A673 (cell line): ENCODE measurements at regions of chr9 and their contacts with region 1.

Region 1: DNA sequence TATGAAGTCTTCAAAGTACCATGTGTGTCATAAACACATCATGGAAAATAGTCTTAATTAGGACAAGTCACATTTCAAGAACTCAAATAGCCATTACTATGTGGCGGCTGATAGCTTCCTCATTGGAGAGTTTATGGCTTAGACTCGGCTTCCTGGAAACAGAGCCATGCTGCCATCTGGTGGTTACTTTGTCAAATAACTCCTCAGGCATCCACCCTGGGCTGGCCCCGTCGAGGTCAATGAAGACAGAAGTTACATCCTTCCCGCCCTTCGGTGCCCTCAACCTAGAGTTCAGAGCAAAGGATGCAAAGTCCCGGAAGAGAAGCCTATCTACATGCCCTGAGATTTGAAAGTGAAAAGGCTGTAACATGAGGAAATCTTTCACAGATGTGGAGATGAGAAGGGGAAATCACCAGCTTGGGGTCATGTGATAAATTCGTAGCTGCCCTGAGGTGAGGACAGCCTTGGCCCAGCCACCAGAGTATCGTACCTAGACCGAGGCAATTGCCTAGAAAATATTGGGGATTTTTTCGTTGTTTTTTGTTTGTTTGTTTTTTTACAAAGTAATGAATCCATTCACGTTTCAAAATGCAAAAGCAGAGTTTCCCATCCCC is 45.5 kb upstream of the ZNF169 start:
- DNase-seq: peak; percentile 81
- H3K4me3 ChIP-seq: no peak overlapping the region
- H3K27ac ChIP-seq: no peak overlapping the region
- H3K4me1 ChIP-seq: peaks cover 12% of the 10 kb centered on the region
- H3K27me3 ChIP-seq: peaks cover 4% of the 10 kb centered on the region
- CTCF ChIP-seq: peak; percentile 82

Region 2: DNA sequence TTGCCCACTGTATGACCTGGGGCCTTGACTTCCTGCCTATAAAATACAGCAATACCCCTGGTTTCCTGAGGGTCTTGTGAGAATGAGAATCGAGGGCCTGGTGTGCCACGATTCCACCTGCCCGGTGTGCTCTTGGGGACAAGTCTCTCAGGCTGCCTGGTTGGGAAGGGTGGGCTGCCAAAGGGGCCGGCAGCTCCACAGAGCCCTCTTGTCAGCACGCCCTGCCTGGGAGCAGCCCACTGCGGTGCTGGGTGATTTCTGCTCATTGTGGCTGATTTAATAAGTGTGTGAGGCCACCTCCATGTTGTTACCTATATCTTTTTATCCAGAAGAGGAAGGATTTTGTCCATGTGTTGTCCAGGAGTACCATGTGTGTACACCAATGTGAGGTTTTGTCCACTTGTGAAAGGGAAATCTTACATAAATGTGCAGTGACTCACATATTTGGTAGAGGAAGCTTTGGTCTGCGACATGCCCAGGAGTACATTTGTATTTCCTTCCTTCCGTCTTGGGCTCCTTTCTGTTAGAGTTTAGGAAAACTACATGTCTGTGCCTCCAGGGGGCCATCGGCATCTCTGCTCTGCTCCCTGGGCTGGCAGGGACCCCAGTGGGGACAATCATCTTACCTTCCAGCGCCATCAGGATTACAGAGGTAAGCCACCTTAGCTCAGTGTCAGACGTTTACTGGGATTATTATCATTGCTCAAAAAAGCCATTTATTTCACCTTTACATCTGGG is 528.6 kb before region 1 on chr9:
- CTCF ChIA-PET with region 1: interaction called, 4 read pairs
- POLR2A ChIA-PET with region 1: no interaction called
- intact Hi-C with region 1: loop called (anchors 5 kb)
- DNase-seq: peak; percentile 29
- H3K4me3 ChIP-seq: no peak overlapping the region
- H3K27ac ChIP-seq: no peak overlapping the region
- H3K4me1 ChIP-seq: no peaks in the 10 kb centered on the region
- H3K27me3 ChIP-seq: no peaks in the 10 kb centered on the region
- CTCF ChIP-seq: peak; percentile 48

Region 3: DNA sequence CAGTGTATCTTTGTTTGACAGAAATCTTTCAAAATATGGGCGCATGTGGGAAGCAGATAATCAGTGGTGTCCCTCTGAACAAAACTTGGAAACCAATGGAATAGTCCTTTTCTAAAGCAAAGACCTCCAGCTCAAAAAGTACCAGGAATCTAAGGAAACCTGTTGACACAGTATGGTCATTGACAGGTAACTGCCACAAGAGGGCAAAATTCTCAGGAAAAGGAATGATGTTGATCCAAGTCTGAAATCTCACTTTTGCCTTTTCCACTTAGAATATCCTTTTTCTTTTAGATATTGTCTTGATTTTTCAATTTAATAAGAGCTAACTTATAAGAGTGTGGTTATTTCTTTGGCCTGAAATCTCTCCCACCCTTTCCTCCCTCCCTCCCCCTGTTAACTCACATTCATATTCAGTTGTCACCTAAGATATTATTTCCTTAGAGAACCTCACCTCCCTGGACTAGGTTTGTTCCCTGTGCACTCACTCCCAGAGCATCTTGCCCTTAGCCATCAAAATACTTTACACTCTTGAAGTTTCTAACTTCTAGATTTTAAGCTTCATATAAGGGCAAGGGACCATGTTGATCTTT is 199.5 kb before region 1 on chr9:
- CTCF ChIA-PET with region 1: interaction called, 36 read pairs
- POLR2A ChIA-PET with region 1: no interaction called
- intact Hi-C with region 1: loop called (anchors 1 kb)
- DNase-seq: peak; percentile 60
- H3K4me3 ChIP-seq: no peak overlapping the region
- H3K27ac ChIP-seq: no peak overlapping the region
- H3K4me1 ChIP-seq: peaks cover 10% of the 10 kb centered on the region
- H3K27me3 ChIP-seq: no peaks in the 10 kb centered on the region
- CTCF ChIP-seq: peak; percentile 68

Region 4: GRCh38 chr9:94054716-94055115 is 158.9 kb before region 1 on chr9:
- CTCF ChIA-PET with region 1: interaction called, 11 read pairs
- POLR2A ChIA-PET with region 1: no interaction called
- intact Hi-C with region 1: no loop called
- DNase-seq: no peak
- H3K4me3 ChIP-seq: no peak overlapping the region
- H3K27ac ChIP-seq: no peak overlapping the region
- H3K4me1 ChIP-seq: peaks cover 8% of the 10 kb centered on the region
- H3K27me3 ChIP-seq: no peaks in the 10 kb centered on the region
- CTCF ChIP-seq: no peak

Region 5: DNA sequence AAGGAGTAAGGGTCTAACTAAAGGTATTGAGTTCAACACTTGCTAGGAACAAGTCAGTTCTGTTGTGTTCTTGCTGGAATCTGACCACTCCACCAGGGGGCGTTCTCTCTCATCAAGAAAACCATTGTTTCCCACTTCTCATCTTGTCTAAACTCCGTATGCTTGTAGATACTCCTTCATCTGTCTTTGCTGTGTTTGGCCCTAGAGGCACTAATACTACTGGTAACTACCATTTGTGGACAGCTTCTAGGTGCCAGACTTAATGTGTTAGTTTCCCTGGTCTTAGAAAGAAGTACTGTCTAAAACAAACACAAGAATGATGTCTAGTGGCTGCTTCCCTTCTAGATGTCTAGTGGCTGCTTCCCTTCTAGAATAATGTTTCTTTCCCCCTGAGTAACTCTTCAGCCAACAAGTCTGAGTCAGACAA is 148.1 kb before region 1 on chr9:
- CTCF ChIA-PET with region 1: interaction called, 21 read pairs
- POLR2A ChIA-PET with region 1: no interaction called
- intact Hi-C with region 1: loop called (anchors 1 kb)
- DNase-seq: peak; percentile 86
- H3K4me3 ChIP-seq: no peak overlapping the region
- H3K27ac ChIP-seq: no peak overlapping the region
- H3K4me1 ChIP-seq: no peaks in the 10 kb centered on the region
- H3K27me3 ChIP-seq: no peaks in the 10 kb centered on the region
- CTCF ChIP-seq: peak; percentile 86

Region 6: GRCh38 chr9:94166237-94166963 is 47.2 kb before region 1 on chr9:
- CTCF ChIA-PET with region 1: no interaction called
- POLR2A ChIA-PET with region 1: interaction called, 12 read pairs
- intact Hi-C with region 1: no loop called
- DNase-seq: peak; percentile 99
- H3K4me3 ChIP-seq: peak overlapping the region; percentile 67
- H3K27ac ChIP-seq: peak overlapping the region; percentile 100
- H3K4me1 ChIP-seq: peaks cover 32% of the 10 kb centered on the region
- H3K27me3 ChIP-seq: no peaks in the 10 kb centered on the region
- CTCF ChIP-seq: no peak